Thyroid gland (tissue), 4 donors: ENCODE measurements at regions of chr9 and their contacts with region 1.

Region 1: DNA sequence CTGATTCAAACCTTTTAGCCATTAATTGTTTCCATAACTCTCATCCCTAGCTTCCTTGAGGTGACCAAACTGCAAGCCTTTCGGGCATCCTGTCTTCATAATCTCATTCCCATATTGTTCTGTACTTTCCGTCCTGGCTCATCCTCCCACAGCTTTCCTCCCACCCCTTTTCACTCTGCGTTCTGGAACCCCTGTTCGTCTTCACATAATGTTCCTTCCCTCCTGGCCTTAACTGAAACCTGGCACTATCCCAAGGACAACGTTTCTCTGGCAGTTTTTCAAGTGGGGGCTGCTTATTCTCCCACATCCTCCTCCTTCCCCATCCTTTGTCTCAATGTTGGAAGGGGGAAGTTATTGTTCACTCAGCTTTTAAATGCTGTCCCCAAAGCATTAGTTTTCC is 1.5 kb downstream of the ZNF189 start:
- DNase-seq: no peak
- H3K4me3 ChIP-seq: no peak overlapping the region
- H3K27ac ChIP-seq: no peak overlapping the region
- H3K4me1 ChIP-seq: peaks cover 14 to 22% of the 10 kb centered on the region in 2 donors
- H3K27me3 ChIP-seq: no peaks in the 10 kb centered on the region
- CTCF ChIP-seq: no peak
- POLR2A ChIP-seq: no peak

Region 2: GRCh38 chr9:101514071-101514470 is 114.0 kb after region 1 on chr9:
- intact Hi-C with region 1: no loop called
- DNase-seq: no peak
- H3K4me3 ChIP-seq: no peak overlapping the region
- H3K27ac ChIP-seq: no peak overlapping the region
- H3K4me1 ChIP-seq: no peaks in the 10 kb centered on the region
- H3K27me3 ChIP-seq: no peaks in the 10 kb centered on the region
- CTCF ChIP-seq: no peak
- POLR2A ChIP-seq: no peak

Region 3: GRCh38 chr9:101533334-101534107 is 133.4 kb after region 1 on chr9 and contains the start of gene RNF20:
- intact Hi-C with region 1: loop called (anchors 2 kb)
- DNase-seq: peak; percentile 100
- H3K4me3 ChIP-seq: peak within 1 kb of the TSS; percentile 61 to 84 (median 75)
- H3K27ac ChIP-seq: peak within 1 kb of the TSS; percentile 91 to 98 (median 91)
- H3K4me1 ChIP-seq: peaks cover 0 to 13% of the 10 kb centered on the region in 2 donors
- H3K27me3 ChIP-seq: no peaks in the 10 kb centered on the region
- CTCF ChIP-seq: no peak
- POLR2A ChIP-seq: peak in 1 of 2 donors; percentile 60
- total RNA-seq, gene RNF20: 26.1 to 31.5 (median 26.7) TPM